OCI-LY7 (cell line): ENCODE measurements at regions of chr6 and their contacts with region 1.

Region 1: GRCh38 chr6:134882426-134883038 is 67.4 kb downstream of the ALDH8A1 start:
- DNase-seq: peak; percentile 65
- H3K4me3 ChIP-seq: no peak overlapping the region
- H3K27ac ChIP-seq: no peak overlapping the region
- H3K4me1 ChIP-seq: peaks cover 6% of the 10 kb centered on the region
- CTCF ChIP-seq: peak; percentile 94

Region 2: GRCh38 chr6:134413241-134413643 is 469.3 kb before region 1 on chr6:
- CTCF ChIA-PET with region 1: no interaction called
- POLR2A ChIA-PET with region 1: no interaction called
- intact Hi-C with region 1: no loop called
- DNase-seq: no peak
- H3K4me3 ChIP-seq: no peak overlapping the region
- H3K27ac ChIP-seq: no peak overlapping the region
- H3K4me1 ChIP-seq: no peaks in the 10 kb centered on the region
- CTCF ChIP-seq: no peak

Region 3: DNA sequence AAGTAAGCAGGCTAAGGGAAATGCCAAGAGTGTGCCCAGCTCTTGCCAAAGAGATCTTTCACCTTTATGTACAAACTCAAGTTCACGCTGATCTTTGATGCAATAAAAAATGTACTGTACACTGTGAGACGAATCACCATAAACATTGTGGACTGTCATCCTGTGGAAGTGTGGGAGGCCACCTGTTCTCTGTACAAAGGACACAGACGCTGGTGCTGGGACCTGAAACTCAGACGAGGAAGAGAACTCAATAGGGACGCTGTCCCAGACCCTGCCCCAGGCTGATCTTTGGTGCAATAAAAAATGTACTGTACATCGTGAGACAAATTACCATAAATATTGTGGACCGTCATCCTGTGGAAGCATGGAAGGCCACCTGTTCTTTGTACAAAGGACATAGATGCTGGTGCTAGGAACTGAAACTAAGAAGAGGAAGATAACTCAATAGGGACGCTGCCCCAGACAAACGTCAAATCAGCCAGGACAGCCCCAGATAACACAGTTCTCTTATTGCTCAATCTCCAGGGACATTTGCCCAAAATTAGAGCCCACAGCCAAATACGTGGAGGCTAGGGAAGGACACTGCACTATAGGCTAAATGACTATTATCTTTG is 251.9 kb before region 1 on chr6:
- CTCF ChIA-PET with region 1: interaction called, 3 read pairs
- POLR2A ChIA-PET with region 1: no interaction called
- intact Hi-C with region 1: loop called (anchors 1 kb)
- DNase-seq: peak; percentile 79
- H3K4me3 ChIP-seq: peak overlapping the region; percentile 42
- H3K27ac ChIP-seq: peak overlapping the region; percentile 38
- H3K4me1 ChIP-seq: peaks cover 37% of the 10 kb centered on the region
- CTCF ChIP-seq: no peak

Region 4: GRCh38 chr6:134938896-134939295 is 56.4 kb after region 1 on chr6:
- CTCF ChIA-PET with region 1: no interaction called
- POLR2A ChIA-PET with region 1: no interaction called
- intact Hi-C with region 1: loop called (anchors 5 kb)
- DNase-seq: peak; percentile 24
- H3K4me3 ChIP-seq: no peak overlapping the region
- H3K27ac ChIP-seq: no peak overlapping the region
- H3K4me1 ChIP-seq: no peaks in the 10 kb centered on the region
- CTCF ChIP-seq: no peak

Region 5: GRCh38 chr6:135270676-135271536 is 388.4 kb after region 1 on chr6:
- CTCF ChIA-PET with region 1: no interaction called
- POLR2A ChIA-PET with region 1: no interaction called
- intact Hi-C with region 1: no loop called
- DNase-seq: peak; percentile 58
- H3K4me3 ChIP-seq: peak overlapping the region; percentile 0
- H3K27ac ChIP-seq: peak overlapping the region; percentile 46
- H3K4me1 ChIP-seq: peaks cover 86% of the 10 kb centered on the region
- CTCF ChIP-seq: no peak